ENCODE measurements at regions of chr11 and their contacts with region 1.

Region 1: DNA sequence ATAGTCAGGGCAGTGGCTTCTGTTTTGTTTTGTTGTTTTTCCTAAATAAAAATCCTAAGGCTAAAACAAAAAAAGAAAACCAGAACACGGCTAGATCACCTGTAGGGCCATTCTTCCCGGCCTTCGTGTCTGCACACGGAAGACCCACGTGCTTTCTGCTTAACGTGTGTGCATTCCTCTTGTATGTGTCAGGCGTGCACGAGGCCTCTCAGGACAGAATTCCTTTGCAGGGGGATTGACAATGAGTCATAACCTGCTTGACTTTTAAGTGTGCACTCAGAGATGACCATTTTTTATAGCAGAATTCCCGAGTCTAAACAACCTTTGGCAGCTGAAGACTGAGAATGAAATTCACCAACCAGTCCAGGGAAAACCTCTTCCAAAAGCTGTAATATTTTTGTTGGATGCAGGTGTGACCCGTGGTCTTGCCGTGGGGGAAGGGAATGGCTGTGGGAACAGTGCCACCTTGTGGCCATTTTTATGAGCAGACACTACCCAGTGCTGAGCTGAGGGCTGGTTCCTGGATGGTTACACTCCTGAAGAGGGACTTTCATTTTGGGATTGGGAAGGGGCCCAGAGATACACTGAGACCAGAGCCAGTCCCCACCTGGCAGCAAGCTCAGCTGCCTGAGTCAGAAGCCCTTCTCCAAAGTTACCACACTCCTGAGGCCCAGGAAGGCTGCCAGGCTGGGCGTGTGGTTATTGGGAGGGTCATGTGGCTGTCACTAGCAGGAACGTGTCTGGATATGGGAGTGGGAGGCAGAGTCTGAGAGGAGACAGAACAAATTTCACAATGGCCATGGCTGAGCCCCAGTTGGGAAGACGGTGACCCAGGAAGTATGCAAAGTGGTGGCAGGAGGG is 35.8 kb upstream of the DKK3 start:
- DNase-seq: peak; percentile 80 to 91
- ATAC-seq: peak; percentile 88 to 91
- H3K4me3 ChIP-seq: no peak overlapping the region
- H3K27ac ChIP-seq: peak overlapping the region; percentile 85 to 86
- H3K4me1 ChIP-seq: peaks cover 44% of the 10 kb centered on the region
- CTCF ChIP-seq: peak; percentile 97
- EP300 ChIP-seq: peak; percentile 18 to 53; a peak in 2 of 5 replicates
- POLR2A ChIP-seq: no peak
- RAD21 ChIP-seq: peak; percentile 99

Region 2: GRCh38 chr11:11798586-11799438 is 245.4 kb before region 1 on chr11:
- CTCF ChIA-PET with region 1: interaction called, 51 read pairs
- POLR2A ChIA-PET with region 1: no interaction called
- DNase-seq: peak; percentile 77 to 78
- ATAC-seq: peak; percentile 96 to 99
- H3K4me3 ChIP-seq: no peak overlapping the region
- H3K27ac ChIP-seq: peak overlapping the region; percentile 47 to 73; a peak in 4 of 6 replicates
- H3K4me1 ChIP-seq: peaks cover 4% of the 10 kb centered on the region; the same call in 2 of the 3 replicates
- CTCF ChIP-seq: peak; percentile 95
- EP300 ChIP-seq: no peak
- POLR2A ChIP-seq: no peak
- RAD21 ChIP-seq: peak; percentile 92

Region 3: DNA sequence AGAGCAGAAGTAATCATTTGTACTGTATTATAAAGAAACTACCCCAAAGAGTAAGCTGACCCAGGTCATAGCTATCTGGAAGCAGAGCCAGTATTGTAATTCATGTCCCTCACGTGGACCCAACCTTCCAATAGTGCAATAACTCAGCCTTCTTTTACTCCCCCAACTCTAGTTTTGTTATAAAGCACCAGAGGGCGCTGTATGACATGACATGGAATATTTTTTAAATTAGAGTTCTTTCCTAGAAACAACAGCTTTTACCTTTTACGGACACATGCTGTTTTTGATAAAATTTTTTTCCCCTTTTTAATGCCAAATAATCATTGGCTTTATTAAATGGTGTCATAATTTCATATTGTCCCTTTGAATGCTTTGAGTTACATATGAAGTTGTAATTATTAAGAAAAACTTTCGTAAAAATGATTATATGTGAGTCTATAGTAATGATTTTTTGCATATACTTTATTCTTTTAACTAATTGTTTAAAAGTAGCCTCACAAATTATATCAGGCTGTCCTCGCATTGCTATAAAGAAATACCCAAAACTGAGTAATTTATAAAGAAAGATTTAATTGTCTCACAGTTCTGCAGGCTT is 112.6 kb before region 1 on chr11:
- CTCF ChIA-PET with region 1: interaction called, 54 read pairs
- POLR2A ChIA-PET with region 1: no interaction called
- DNase-seq: peak; percentile 26 to 64
- ATAC-seq: peak; percentile 73 to 82; a peak in 4 of 6 replicates
- H3K4me3 ChIP-seq: no peak overlapping the region
- H3K27ac ChIP-seq: no peak overlapping the region
- H3K4me1 ChIP-seq: peaks cover 4% of the 10 kb centered on the region; the same call in 2 of the 3 replicates
- CTCF ChIP-seq: peak; percentile 84
- EP300 ChIP-seq: no peak
- POLR2A ChIP-seq: no peak
- RAD21 ChIP-seq: peak; percentile 84 to 85

Region 4: GRCh38 chr11:11960687-11961086 is 83.5 kb before region 1 on chr11:
- CTCF ChIA-PET with region 1: interaction called, 22 read pairs
- POLR2A ChIA-PET with region 1: no interaction called
- DNase-seq: no peak
- ATAC-seq: no peak
- H3K4me3 ChIP-seq: no peak overlapping the region
- H3K27ac ChIP-seq: no peak overlapping the region
- H3K4me1 ChIP-seq: no peaks in the 10 kb centered on the region
- CTCF ChIP-seq: no peak
- EP300 ChIP-seq: no peak
- POLR2A ChIP-seq: no peak
- RAD21 ChIP-seq: no peak

Region 5: DNA sequence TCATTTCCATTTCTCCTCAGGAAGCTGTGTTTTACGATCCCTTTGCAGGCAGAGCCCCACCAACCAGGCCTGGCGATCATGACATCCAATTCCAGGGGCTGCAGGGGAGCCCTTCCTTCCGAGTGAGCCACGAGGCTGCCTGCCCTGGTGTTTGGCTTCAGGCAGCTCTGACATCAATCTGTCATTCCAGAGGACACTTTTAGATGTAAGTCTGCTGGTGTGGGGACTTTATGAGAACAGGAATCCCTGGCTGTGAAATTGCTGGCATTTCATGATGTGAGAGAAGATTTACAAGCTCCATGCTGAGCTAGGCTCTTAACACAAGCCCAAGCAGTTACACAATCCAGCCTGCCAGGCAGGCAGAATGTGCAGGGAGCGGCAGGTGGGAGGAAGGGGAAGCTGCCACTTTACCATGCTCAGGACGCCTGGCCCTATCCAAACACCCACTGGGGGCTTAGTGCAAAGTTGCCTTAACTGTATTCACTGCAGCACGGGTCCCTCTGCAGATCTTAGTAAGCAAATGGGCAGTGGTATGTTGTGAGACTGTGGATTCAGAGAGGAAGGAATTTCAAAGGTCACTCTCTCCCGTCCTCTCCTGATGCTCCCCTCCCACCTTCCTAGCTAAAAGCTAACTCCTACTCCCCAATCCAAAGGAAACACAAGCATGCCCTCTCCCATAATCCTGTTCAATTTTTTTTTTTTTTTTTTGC is 22.8 kb after region 1 on chr11:
- CTCF ChIA-PET with region 1: interaction called, 53 read pairs
- POLR2A ChIA-PET with region 1: no interaction called
- DNase-seq: peak in 1 of 2 experiments; percentile 93
- ATAC-seq: peak; percentile 83 to 84
- H3K4me3 ChIP-seq: peak overlapping the region; percentile 8; the same call in 1 of the 3 replicates
- H3K27ac ChIP-seq: peak overlapping the region; percentile 97
- H3K4me1 ChIP-seq: peaks cover 66% of the 10 kb centered on the region
- CTCF ChIP-seq: no peak
- EP300 ChIP-seq: peak; percentile 51 to 79; a peak in 3 of 5 replicates
- POLR2A ChIP-seq: no peak
- RAD21 ChIP-seq: no peak

Region 6: GRCh38 chr11:12185914-12186313 is 141.7 kb after region 1 on chr11:
- CTCF ChIA-PET with region 1: interaction called, 12 read pairs
- POLR2A ChIA-PET with region 1: no interaction called
- DNase-seq: no peak
- ATAC-seq: no peak
- H3K4me3 ChIP-seq: no peak overlapping the region
- H3K27ac ChIP-seq: peak overlapping the region in 1 of 2 experiments; percentile 49; a peak in 2 of 6 replicates
- H3K4me1 ChIP-seq: peaks cover 38% of the 10 kb centered on the region
- CTCF ChIP-seq: no peak
- EP300 ChIP-seq: no peak
- POLR2A ChIP-seq: no peak
- RAD21 ChIP-seq: no peak

Region 7: GRCh38 chr11:12263141-12263693 is 219.0 kb after region 1 on chr11:
- CTCF ChIA-PET with region 1: interaction called, 23 read pairs
- POLR2A ChIA-PET with region 1: no interaction called
- DNase-seq: no peak
- ATAC-seq: no peak; a peak in 1 of 6 replicates
- H3K4me3 ChIP-seq: no peak overlapping the region
- H3K27ac ChIP-seq: no peak overlapping the region
- H3K4me1 ChIP-seq: peaks cover 5% of the 10 kb centered on the region
- CTCF ChIP-seq: no peak
- EP300 ChIP-seq: no peak
- POLR2A ChIP-seq: no peak
- RAD21 ChIP-seq: no peak

Region 8: DNA sequence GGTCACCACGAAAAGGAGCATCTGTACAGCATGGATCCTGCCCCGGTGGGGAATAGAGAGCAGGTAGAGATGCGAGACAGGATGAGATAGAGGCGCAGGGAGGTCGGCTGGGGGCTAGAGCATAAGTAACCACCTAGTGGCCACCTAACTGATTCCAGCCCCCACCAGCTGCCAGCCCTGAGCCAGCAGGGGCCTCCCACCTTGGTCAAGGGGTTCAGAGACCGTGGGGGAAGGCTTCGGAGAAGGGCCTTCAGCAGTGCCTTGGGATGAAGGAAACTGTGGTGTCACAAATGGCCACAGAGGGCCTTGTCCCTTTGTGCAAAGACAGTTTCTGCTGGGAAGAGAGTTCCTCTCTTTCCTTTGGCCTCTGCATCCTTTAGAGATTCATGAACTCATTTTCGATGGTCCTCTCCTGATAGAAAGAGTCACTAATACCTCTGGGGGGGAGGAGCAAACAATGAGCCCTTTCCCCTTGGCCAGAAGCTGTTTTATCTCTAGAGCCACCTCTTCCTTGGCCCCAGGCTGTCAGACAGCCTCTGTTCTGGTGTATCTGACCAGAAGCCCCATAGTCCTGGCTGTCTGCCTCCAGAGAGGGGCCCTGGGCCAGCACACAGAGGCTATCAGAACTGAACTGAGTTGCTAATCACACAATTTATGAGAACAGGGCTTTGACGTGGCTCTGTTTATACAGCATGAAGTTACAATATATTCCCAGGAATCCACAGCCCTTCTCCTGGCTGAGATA is 479.2 kb after region 1 on chr11:
- CTCF ChIA-PET with region 1: no interaction called
- POLR2A ChIA-PET with region 1: no interaction called
- DNase-seq: no peak
- ATAC-seq: peak in 1 of 2 experiments; percentile 30; a peak in 2 of 6 replicates
- H3K4me3 ChIP-seq: no peak overlapping the region
- H3K27ac ChIP-seq: no peak overlapping the region
- H3K4me1 ChIP-seq: peaks cover 7% of the 10 kb centered on the region; the same call in 1 of the 3 replicates
- CTCF ChIP-seq: no peak
- EP300 ChIP-seq: no peak
- POLR2A ChIP-seq: no peak
- RAD21 ChIP-seq: no peak

Measured in A549 (cell line).